ENCODE measurements at regions of chr11 and their contacts with region 1.

Region 1: DNA sequence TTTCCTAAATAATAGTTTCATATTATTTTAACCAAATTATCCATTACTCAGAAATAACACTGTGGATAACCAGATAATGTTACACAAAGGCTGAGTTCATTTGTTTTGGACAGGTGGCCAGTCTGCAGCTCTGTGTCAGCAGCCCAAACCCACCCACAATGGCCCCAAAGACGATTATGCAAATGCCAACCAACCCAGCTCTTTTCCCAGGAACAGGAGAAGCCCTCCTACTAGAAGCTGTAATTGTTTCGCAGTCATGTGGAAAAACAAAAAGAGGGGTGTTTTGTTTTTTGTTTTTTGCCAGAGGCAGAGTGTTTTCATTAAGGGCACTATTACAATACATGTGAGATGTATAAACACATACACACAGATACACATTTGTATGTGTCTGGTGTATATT is 102.1 kb downstream of the FCHSD2 start:
- DNase-seq: no peak
- H3K4me3 ChIP-seq: no peak overlapping the region
- H3K27ac ChIP-seq: no peak overlapping the region
- H3K4me1 ChIP-seq: no peaks in the 10 kb centered on the region
- H3K27me3 ChIP-seq: no peaks in the 10 kb centered on the region
- CTCF ChIP-seq: no peak

Region 2: GRCh38 chr11:73012121-73012863 is 27.8 kb before region 1 on chr11:
- CTCF ChIA-PET with region 1: no interaction called
- POLR2A ChIA-PET with region 1: interaction called, 16 read pairs
- intact Hi-C with region 1: no loop called
- DNase-seq: no peak
- H3K4me3 ChIP-seq: no peak overlapping the region
- H3K27ac ChIP-seq: no peak overlapping the region
- H3K4me1 ChIP-seq: no peaks in the 10 kb centered on the region
- H3K27me3 ChIP-seq: no peaks in the 10 kb centered on the region
- CTCF ChIP-seq: no peak

Measured in A673 (cell line).